HEK293 (cell line): ENCODE measurements at regions of chr9 and their contacts with region 1.

Region 1: DNA sequence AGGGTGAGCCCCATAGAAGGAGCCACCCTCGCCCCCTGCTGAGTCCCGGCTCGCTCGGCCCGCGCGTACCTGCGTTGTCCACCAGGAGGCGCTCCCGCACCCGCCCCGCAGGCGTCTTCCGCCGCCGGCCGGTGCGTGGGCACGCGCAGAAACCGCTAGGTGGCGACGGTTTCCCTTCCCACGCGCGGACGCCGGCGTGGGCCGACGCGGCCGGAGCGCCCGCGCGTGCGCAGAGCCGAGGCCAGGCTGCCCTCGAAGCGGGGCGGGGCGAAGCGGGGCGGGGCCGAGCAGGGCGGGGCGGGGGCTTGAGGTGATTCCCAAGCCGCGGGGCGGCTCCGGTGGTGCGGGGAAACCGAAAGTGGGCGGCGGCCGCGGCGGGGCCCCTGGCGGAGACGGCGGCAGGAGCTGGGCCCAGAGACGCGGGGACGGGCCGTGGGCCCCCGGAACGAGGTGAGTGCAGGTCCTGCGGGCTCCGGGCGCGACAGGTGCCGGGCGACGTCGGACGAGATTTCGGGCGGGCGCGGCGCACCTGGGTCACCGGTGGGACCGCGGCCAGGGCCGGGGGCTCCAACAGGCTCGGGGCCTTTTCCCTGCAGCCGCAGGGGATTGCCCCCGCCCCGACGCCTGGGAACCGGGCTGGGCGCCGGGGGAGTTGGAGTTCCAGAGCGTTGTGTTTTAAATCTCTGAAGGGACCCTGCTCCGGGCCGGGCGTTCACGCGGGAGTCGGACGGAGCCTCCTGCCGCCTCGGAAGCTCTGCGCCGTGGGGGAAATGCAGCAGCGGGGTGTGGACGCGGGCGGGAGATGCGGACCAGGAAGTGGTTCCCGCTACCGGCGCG is at the start of gene TDRD7:
- H3K4me3 ChIP-seq: peak within 1 kb of the TSS; percentile 81
- H3K27ac ChIP-seq: peak within 1 kb of the TSS; percentile 53; the same call in 1 of the 2 replicates
- H3K4me1 ChIP-seq: no peaks in the 10 kb centered on the region
- CTCF ChIP-seq: peak; percentile 79

Region 2: DNA sequence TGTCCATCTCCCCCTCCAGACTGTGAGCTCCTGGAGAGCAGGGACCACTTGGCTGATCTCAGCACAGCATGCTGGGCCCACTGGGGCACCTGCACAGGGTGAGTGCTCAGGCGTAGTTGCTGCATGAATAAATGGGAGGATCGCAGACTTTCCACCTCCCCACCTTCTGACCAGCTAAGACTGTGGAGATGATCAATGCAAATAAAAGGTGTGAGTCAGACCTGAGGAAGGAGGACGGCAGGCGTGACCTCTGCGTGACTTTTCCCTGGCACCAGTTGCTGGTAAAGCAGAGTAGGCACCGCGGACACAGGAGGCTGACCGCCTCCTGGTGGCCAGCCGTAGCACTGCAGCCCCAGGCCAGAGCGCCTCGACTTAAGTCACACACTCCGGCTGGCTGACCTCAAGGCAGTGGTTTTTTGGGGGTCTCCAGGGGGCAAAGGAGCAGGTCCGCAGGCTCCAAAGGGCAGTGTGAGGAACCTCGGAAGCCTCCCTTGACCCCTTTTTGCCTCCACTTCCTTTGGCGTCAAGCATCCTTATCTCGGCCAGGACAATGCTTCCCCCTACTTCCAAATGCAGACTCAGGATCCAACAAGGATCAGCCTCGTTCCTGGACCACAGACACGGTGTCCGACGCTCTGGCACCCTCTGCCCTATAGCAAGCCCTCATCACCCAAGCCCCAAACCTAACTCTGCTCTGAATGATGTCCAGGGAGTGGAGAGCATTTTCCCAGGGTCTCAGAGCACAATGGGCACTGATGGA is 12.8 kb before region 1 on chr9:
- CTCF ChIA-PET with region 1: interaction called, 57 read pairs
- POLR2A ChIA-PET with region 1: no interaction called
- H3K4me3 ChIP-seq: no peak overlapping the region
- H3K27ac ChIP-seq: no peak overlapping the region
- H3K4me1 ChIP-seq: no peaks in the 10 kb centered on the region
- CTCF ChIP-seq: peak; percentile 49

Region 3: DNA sequence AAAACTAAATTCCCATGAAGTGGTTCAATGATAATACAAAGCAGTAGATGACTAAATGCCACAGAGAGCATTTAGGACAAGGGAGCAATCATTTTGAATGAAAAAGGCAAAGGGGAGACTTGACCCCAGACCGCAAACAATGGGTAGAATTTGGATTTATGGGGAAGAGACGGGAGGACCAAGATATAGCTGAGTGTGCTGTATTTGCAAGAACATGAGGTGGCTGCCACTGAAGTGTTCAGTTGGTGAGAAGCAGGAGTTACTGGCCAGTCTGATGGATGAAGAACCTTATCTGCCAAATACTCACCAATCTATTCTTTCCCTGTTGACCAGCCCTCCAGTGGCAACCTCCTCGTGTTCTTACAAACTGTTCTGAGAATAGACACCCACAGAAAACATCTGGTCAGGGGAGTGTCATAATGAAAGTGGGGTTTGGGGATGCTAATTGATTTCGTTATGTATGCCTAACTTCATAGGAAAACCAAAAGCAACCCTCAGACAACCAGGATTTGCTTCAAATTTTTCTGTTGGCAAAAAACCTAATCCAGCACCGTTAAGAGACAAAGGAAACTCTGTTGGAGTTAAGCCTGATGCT is 19.6 kb after region 1 on chr9:
- CTCF ChIA-PET with region 1: no interaction called
- POLR2A ChIA-PET with region 1: no interaction called
- H3K4me3 ChIP-seq: no peak overlapping the region
- H3K27ac ChIP-seq: no peak overlapping the region
- H3K4me1 ChIP-seq: no peaks in the 10 kb centered on the region
- CTCF ChIP-seq: no peak